ENCODE measurements at regions of chr18 and their contacts with region 1.

Region 1: GRCh38 chr18:74661691-74662090 is 64.0 kb downstream of the ZNF407 start:
- DNase-seq: no peak
- H3K4me3 ChIP-seq: no peak overlapping the region
- H3K27ac ChIP-seq: no peak overlapping the region
- H3K4me1 ChIP-seq: no peaks in the 10 kb centered on the region
- H3K27me3 ChIP-seq: no peaks in the 10 kb centered on the region
- CTCF ChIP-seq: no peak

Region 2: GRCh38 chr18:74692367-74693013 is 30.8 kb after region 1 on chr18:
- CTCF ChIA-PET with region 1: no interaction called
- dilution Hi-C with region 1: no loop called
- in situ Hi-C with region 1: no loop called
- intact Hi-C with region 1: no loop called
- DNase-seq: no peak
- H3K4me3 ChIP-seq: no peak overlapping the region
- H3K27ac ChIP-seq: no peak overlapping the region
- H3K4me1 ChIP-seq: no peaks in the 10 kb centered on the region
- H3K27me3 ChIP-seq: no peaks in the 10 kb centered on the region
- CTCF ChIP-seq: no peak

Region 3: GRCh38 chr18:75489493-75490190 is 828.0 kb after region 1 on chr18:
- CTCF ChIA-PET with region 1: no interaction called
- dilution Hi-C with region 1: no loop called
- in situ Hi-C with region 1: loop called in 1 of 2 experiments (anchors 10 kb)
- intact Hi-C with region 1: no loop called
- DNase-seq: peak; percentile 88
- H3K4me3 ChIP-seq: no peak overlapping the region
- H3K27ac ChIP-seq: peak overlapping the region; percentile 81
- H3K4me1 ChIP-seq: peaks cover 25% of the 10 kb centered on the region
- H3K27me3 ChIP-seq: no peaks in the 10 kb centered on the region
- CTCF ChIP-seq: no peak